ENCODE measurements at regions of chr1 and their contacts with region 1.

Region 1: GRCh38 chr1:121458291-121459048 is 273.7 kb downstream of the SRGAP2C start:
- DNase-seq: no peak
- ATAC-seq: no peak
- H3K4me3 ChIP-seq: peak overlapping the region in 2 of 12 donors; percentile 3 to 28
- H3K27ac ChIP-seq: peak overlapping the region in 1 of 12 donors; percentile 12
- H3K4me1 ChIP-seq: peaks cover 0 to 13% (median 0%) of the 10 kb centered on the region in 12 donors
- H3K27me3 ChIP-seq: no peaks in the 10 kb centered on the region
- CTCF ChIP-seq: no peak
- POLR2A ChIP-seq: no peak

Region 2: DNA sequence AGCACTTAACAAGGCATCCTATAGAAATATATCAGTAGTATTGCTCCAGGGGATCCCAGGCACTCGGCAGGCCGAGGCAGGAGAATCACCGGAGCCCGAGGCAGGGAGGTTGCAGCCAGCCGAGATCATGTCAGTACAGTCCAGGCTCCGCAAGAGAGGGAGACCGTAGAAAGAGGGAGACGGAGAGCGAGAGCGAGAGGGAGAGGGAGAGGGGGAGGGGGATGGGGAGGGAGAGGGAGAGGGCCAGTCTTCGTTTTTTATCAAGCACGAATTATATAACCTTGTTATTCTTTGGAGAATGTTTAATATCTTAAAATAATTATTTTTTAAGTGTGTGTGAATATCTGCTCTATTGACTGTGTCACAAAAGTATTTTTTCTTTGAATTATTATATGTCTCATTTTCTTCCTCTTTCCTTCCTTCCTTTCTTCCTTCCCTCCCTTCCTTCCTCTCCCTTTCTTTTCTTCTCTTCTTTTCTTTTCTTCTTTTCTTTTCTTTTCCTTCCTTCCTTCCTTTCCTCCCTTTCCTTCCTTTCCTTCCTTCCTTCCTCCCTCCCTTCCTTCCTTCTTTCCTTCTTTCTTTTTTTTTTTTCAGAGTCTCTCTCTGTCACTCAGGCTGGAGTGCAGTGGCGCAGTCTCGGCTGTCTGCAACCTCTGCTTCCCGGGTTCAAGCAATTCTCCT is 40.0 kb before region 1 on chr1:
- intact Hi-C with region 1: loop called in 1 of 10 experiments (anchors 5 kb)
- DNase-seq: no peak
- ATAC-seq: peak in 2 of 4 donors; percentile 26 to 61
- H3K4me3 ChIP-seq: no peak overlapping the region
- H3K27ac ChIP-seq: no peak overlapping the region
- H3K4me1 ChIP-seq: peaks cover 0 to 19% (median 1%) of the 10 kb centered on the region in 12 donors
- H3K27me3 ChIP-seq: no peaks in the 10 kb centered on the region
- CTCF ChIP-seq: no peak
- POLR2A ChIP-seq: no peak

Region 3: GRCh38 chr1:121558514-121558913 is 100.0 kb after region 1 on chr1:
- intact Hi-C with region 1: no loop called
- DNase-seq: peak in 1 of 5 donors; percentile 26
- ATAC-seq: peak in 2 of 4 donors; percentile 42 to 74
- H3K4me3 ChIP-seq: no peak overlapping the region
- H3K27ac ChIP-seq: peak overlapping the region in 1 of 12 donors; percentile 59
- H3K4me1 ChIP-seq: peaks cover 0 to 4% (median 0%) of the 10 kb centered on the region in 12 donors
- H3K27me3 ChIP-seq: peaks cover 0 to 9% (median 0%) of the 10 kb centered on the region in 9 donors
- CTCF ChIP-seq: no peak
- POLR2A ChIP-seq: no peak

Measured in heart left ventricle (tissue), 16 donors.